Activated B cell treated with CpG ODN at 0.5 μM for 24 hours (primary cell): ENCODE measurements at regions of chr15 and their contacts with region 1.

Region 1: DNA sequence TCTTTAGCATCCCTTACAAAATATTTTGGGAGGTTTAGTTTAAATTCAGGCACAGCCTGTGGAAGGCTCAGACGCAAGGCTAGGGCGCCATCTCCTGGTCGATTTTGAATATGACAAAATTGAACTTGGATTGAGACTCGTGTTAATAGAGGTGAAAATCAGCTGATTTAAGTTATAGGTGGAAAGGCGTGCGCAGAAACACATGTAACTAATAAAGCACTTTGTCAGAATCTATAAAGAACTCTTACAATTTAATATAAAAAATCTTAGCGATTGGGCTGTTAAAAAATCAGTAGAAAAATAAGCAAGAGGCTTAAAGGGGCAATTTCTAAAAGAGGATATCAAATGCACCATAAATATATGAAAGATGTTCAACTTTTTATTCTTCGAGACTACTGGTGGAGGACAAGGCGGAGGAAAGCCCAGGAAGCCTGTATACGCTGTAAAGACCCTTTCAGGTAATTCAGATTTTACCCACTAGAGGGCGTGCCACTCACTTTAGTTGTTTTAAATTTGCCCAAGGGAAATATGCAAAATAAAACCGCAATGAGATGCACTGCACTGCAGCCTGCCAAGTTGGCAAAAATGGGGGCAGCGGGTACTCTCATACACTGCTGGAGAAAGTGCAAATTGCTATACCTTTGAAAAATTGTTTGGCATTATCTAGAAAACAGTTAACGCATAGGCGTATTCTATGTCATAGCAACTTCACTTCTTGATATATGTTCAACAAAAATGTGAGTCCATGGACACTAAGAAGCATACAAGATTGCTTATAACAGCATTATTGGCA is 64.7 kb downstream of the SLC30A4 start:
- DNase-seq: peak; percentile 26
- ATAC-seq: peak; percentile 74
- H3K4me3 Mint-ChIP-seq: peak overlapping the region; percentile 78
- H3K27ac Mint-ChIP-seq: peak overlapping the region; percentile 87
- H3K4me1 Mint-ChIP-seq: peaks cover 44% of the 10 kb centered on the region
- H3K27me3 Mint-ChIP-seq: no peaks in the 10 kb centered on the region
- CTCF ChIP-seq: peak; percentile 91

Region 2: GRCh38 chr15:45048794-45049631 is 408.8 kb before region 1 on chr15:
- CTCF ChIA-PET with region 1: no interaction called
- POLR2A ChIA-PET with region 1: no interaction called
- intact Hi-C with region 1: loop called (anchors 5 kb)
- DNase-seq: no peak
- ATAC-seq: peak; percentile 87
- H3K4me3 Mint-ChIP-seq: peak overlapping the region; percentile 78
- H3K27ac Mint-ChIP-seq: peak overlapping the region; percentile 98
- H3K4me1 Mint-ChIP-seq: peaks cover 39% of the 10 kb centered on the region
- H3K27me3 Mint-ChIP-seq: no peaks in the 10 kb centered on the region
- CTCF ChIP-seq: no peak

Region 3: DNA sequence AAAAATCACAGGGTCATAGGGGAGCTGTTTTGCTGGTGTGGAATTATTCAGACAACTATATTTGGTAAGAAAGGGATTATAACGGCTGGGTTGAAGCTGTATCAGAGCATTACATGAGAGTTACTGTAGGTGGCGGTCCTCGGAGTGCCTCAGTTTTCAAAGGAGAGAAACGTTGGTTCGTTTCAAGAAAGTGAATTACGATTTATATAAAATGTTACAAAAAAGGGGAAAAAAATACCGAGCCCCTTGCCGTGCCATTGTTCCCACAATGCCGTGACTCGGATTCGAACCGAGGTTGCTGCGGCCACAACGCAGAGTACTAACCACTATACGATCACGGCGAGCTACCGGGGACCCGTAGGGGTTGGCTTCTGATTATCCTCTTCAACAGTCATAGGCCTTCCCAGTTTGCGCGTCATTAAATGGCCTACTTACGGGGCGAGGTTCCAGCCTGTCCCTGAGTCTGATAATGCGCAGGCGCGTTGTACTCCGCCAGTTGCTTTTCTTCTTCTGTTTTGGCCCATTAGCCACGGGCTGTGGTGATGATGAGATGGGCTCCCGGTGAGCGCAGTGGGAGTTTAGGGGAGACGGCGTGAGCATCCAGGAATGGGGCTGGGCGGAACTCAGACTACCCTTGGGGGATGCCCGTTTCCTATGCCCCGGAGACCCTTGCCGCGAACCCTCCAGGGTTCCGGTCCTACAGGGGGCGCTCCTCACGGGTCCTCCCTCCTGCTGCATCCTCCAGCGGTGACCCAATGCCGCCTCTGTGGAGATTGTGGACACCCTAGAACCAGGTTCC is 259.3 kb before region 1 on chr15:
- CTCF ChIA-PET with region 1: no interaction called
- POLR2A ChIA-PET with region 1: no interaction called
- intact Hi-C with region 1: loop called (anchors 1 kb)
- DNase-seq: peak; percentile 88
- ATAC-seq: peak; percentile 66
- H3K4me3 Mint-ChIP-seq: no peak overlapping the region
- H3K27ac Mint-ChIP-seq: no peak overlapping the region
- H3K4me1 Mint-ChIP-seq: peaks cover 10% of the 10 kb centered on the region
- H3K27me3 Mint-ChIP-seq: no peaks in the 10 kb centered on the region
- CTCF ChIP-seq: no peak

Region 4: DNA sequence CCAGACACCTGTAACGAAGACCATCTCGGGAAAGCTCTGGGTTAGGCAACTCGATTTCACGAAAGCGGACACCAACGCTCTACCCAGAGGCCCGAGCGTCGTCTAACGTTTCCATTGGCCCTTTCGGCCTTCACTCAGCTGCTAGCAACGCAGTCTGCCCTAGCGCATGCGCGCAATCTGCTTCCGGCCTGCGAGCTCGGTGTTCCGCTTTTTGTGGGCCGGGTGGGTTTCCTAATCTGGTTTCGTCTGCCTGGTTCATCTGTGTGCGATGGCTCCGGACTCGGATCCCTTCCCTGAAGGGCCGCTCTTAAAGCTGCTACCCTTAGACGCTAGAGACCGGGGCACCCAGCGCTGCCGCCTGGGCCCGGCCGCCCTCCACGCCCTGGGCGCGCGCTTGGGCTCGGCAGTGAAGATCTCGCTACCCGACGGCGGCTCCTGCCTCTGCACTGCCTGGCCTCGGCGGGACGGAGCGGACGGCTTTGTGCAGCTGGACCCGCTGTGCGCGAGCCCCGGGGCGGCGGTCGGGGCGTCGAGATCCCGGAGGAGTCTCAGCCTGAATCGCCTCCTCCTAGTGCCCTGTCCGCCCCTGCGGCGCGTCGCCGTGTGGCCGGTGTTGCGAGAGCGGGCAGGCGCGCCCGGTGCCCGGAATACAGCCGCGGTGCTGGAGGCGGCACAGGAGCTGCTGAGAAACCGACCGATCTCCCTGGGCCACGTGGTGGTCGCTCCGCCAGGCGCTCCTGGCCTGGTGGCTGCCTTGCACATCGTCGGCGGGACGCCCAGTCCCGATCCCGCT is 55.5 kb before region 1 on chr15:
- CTCF ChIA-PET with region 1: interaction called, 5 read pairs
- POLR2A ChIA-PET with region 1: interaction called, 8 read pairs
- intact Hi-C with region 1: loop called (anchors 1 kb)
- DNase-seq: peak; percentile 90
- ATAC-seq: peak; percentile 92
- H3K4me3 Mint-ChIP-seq: peak overlapping the region; percentile 95
- H3K27ac Mint-ChIP-seq: peak overlapping the region; percentile 91
- H3K4me1 Mint-ChIP-seq: peaks cover 33% of the 10 kb centered on the region
- H3K27me3 Mint-ChIP-seq: no peaks in the 10 kb centered on the region
- CTCF ChIP-seq: no peak

Region 5: DNA sequence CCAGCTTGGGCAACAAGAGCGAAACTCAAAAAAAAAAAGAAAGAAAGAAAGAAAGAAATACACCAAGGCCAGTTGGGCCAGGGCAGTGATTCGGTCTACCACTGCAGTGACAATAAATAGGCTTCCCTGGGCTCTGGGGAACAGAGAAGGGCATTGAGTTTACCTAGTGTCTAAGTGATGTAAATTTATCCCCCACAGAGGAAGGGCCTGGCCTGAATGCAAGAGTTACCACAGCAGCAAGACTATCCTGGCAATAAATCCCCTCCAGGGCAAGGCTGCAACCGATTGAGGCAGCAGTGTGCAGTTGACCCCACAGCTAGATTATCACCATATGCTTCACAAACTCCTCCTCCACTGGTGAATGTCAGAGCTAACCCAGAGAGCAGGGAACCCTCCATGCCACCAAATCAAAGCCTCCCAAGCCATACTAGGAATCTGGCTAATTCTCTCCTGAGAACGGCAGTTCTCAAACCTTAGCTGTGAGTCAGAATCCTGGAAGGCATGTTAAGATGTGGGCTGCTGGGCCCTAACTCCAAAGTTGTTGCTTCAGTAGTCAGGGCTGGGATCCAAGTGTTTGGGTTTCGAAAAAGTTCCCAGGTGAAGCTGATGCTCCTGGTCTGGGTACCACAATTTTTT is 15.2 kb before region 1 on chr15:
- CTCF ChIA-PET with region 1: interaction called, 12 read pairs
- POLR2A ChIA-PET with region 1: no interaction called
- intact Hi-C with region 1: no loop called
- DNase-seq: no peak
- ATAC-seq: no peak
- H3K4me3 Mint-ChIP-seq: no peak overlapping the region
- H3K27ac Mint-ChIP-seq: no peak overlapping the region
- H3K4me1 Mint-ChIP-seq: no peaks in the 10 kb centered on the region
- H3K27me3 Mint-ChIP-seq: peaks cover 5% of the 10 kb centered on the region
- CTCF ChIP-seq: no peak

Region 6: DNA sequence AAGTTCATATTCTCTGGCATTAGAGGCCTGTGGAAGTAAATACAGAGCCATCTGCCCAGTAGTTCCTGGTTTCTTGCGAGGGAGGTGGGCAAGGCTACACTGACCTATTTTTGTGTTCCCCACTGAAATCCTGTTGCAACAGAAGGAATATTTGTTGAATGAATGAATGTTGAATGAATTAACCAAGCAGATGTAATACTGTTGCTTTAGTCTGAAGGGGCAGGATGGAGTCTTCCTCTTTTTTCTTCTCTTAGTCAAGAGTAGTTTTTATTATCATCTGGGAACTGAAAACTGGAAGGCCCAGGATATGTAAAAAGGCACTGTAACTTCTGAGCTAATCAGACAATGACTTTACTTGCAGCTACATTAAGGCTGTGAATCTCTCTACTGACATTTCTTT is 146.5 kb after region 1 on chr15:
- CTCF ChIA-PET with region 1: interaction called, 12 read pairs
- POLR2A ChIA-PET with region 1: interaction called, 4 read pairs
- intact Hi-C with region 1: no loop called
- DNase-seq: no peak
- ATAC-seq: no peak
- H3K4me3 Mint-ChIP-seq: peak overlapping the region; percentile 30
- H3K27ac Mint-ChIP-seq: peak overlapping the region; percentile 64
- H3K4me1 Mint-ChIP-seq: peaks cover 47% of the 10 kb centered on the region
- H3K27me3 Mint-ChIP-seq: no peaks in the 10 kb centered on the region
- CTCF ChIP-seq: no peak